ENCODE measurements at regions of chr3 and their contacts with region 1.

Region 1: GRCh38 chr3:56251343-56251945 is 216.8 kb downstream of the ERC2 start:
- DNase-seq: peak; percentile 50
- H3K4me3 Mint-ChIP-seq: no peak overlapping the region
- H3K27ac Mint-ChIP-seq: no peak overlapping the region
- H3K4me1 Mint-ChIP-seq: no peaks in the 10 kb centered on the region
- H3K27me3 Mint-ChIP-seq: peaks cover 41% of the 10 kb centered on the region
- CTCF ChIP-seq: no peak

Region 2: GRCh38 chr3:54427941-54428871 is 1823.2 kb before region 1 on chr3:
- CTCF ChIA-PET with region 1: no interaction called
- intact Hi-C with region 1: loop called (anchors 10 kb)
- DNase-seq: peak; percentile 60
- H3K4me3 Mint-ChIP-seq: no peak overlapping the region
- H3K27ac Mint-ChIP-seq: no peak overlapping the region
- H3K4me1 Mint-ChIP-seq: no peaks in the 10 kb centered on the region
- H3K27me3 Mint-ChIP-seq: peaks cover 19% of the 10 kb centered on the region
- CTCF ChIP-seq: peak; percentile 54

Region 3: GRCh38 chr3:54853573-54854404 is 1397.7 kb before region 1 on chr3:
- CTCF ChIA-PET with region 1: no interaction called
- intact Hi-C with region 1: loop called (anchors 5 kb)
- DNase-seq: peak; percentile 71
- H3K4me3 Mint-ChIP-seq: no peak overlapping the region
- H3K27ac Mint-ChIP-seq: no peak overlapping the region
- H3K4me1 Mint-ChIP-seq: no peaks in the 10 kb centered on the region
- H3K27me3 Mint-ChIP-seq: peaks cover 14% of the 10 kb centered on the region
- CTCF ChIP-seq: peak; percentile 75

Region 4: GRCh38 chr3:55897573-55898224 is 353.7 kb before region 1 on chr3:
- CTCF ChIA-PET with region 1: no interaction called
- intact Hi-C with region 1: loop called (anchors 5 kb)
- DNase-seq: peak; percentile 1
- H3K4me3 Mint-ChIP-seq: no peak overlapping the region
- H3K27ac Mint-ChIP-seq: no peak overlapping the region
- H3K4me1 Mint-ChIP-seq: no peaks in the 10 kb centered on the region
- H3K27me3 Mint-ChIP-seq: no peaks in the 10 kb centered on the region
- CTCF ChIP-seq: no peak

Region 5: DNA sequence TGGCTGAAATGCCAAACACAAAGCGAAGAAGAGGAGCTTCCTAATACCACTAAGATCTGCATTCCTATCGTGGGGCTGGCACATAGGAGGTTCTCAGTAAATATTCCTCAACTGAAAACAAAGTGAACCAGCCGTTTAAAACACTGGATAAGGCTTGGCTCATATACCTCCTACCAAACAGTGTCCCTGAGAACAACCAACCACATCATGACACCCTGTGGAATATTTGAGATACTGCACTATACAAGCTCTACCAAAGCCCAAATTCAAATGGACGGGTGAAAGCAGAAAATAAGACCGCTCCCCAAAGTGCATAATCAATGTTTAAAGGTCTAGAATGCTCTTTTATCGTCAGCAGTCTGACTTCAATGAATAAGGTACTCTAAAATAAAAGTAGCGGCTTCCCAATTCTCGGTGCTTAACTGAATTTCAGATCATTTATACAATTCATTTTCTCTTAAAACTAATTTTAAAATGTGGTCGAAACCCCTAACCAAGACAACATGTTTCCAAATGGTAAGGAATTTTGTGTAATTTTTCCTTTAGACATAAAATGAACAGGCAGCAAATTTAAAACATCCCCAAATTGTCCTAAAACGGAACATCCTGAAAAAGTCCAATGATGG is 209.0 kb before region 1 on chr3:
- CTCF ChIA-PET with region 1: interaction called, 3 read pairs
- intact Hi-C with region 1: loop called (anchors 10 kb)
- DNase-seq: no peak
- H3K4me3 Mint-ChIP-seq: no peak overlapping the region
- H3K27ac Mint-ChIP-seq: no peak overlapping the region
- H3K4me1 Mint-ChIP-seq: no peaks in the 10 kb centered on the region
- H3K27me3 Mint-ChIP-seq: peaks cover 26% of the 10 kb centered on the region
- CTCF ChIP-seq: no peak

Region 6: GRCh38 chr3:56453011-56453410 is 201.6 kb after region 1 on chr3:
- CTCF ChIA-PET with region 1: no interaction called
- intact Hi-C with region 1: no loop called
- DNase-seq: no peak
- H3K4me3 Mint-ChIP-seq: no peak overlapping the region
- H3K27ac Mint-ChIP-seq: no peak overlapping the region
- H3K4me1 Mint-ChIP-seq: no peaks in the 10 kb centered on the region
- H3K27me3 Mint-ChIP-seq: peaks cover 47% of the 10 kb centered on the region
- CTCF ChIP-seq: no peak

Measured in Calu3 (cell line).